Ascending aorta (tissue), 2 donors: ENCODE measurements at regions of chr4 and their contacts with region 1.

Region 1: DNA sequence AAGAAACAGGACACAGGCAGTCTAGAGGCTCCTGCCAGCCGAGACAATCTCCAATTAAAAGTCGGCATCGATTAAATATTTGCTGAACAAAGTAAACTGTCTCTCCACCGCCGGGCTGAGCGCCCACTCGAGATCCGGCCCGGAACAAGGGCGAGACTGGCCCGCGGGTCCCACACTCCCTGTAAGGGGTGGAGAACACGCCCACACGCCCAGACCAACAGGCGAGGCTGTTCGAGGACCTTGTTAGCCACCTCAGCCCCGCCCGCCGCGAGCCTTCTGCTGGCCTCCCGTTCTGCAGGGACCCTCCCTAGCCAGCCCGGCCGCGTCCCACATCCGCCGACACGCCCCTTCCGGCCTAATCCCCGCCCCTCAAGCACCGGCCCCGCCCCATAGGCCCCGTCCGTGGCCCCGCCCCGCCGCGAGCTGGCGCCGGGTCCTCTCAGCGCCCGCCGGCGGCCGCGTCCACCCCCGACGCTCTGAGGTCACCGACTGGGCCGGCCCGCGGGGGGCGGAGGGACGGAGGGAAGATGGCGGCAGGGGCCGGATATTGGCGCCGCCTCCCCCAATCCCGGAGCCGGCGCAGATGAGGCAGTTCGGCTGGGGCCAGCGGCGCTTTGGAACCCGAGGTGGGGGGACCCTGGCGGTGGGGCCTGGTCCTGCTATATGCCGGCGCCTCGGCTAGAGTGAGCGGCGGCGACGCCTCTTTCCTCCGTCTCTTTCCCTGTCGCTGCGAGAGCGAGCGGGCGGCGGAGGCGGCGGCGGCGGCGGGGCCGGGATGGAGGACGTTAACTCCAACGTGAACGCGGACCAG is at the start of gene SLAIN2:
- DNase-seq: peak; percentile 96 to 100
- H3K4me3 ChIP-seq: peak within 1 kb of the TSS; percentile 86 to 93
- H3K27ac ChIP-seq: peak within 1 kb of the TSS; percentile 98 to 99
- H3K4me1 ChIP-seq: peaks cover 11 to 14% of the 10 kb centered on the region in 2 donors
- H3K27me3 ChIP-seq: no peaks in the 10 kb centered on the region
- CTCF ChIP-seq: peak; percentile 26 to 51 (median 35)
- total RNA-seq, gene SLAIN2: 26.3 TPM

Region 2: DNA sequence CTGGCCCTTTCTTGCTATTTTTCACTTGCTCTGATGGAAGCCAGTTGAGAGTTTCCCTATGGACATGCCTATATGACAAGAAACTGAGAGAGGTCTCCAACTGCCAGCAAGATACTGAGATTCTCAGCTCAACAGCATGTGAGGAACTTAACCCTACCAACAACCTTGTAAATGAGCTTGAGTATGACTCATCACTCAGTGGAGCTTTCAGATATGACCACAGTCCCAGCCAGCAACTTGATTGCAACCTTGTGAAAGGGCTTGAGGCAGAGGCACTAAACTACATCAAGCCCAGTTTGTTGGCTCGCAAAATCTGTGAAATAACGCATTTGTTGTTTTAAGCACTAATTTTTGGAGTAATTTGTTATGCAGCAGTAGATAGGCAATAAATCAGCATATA is 1053.4 kb before region 1 on chr4:
- intact Hi-C with region 1: no loop called
- DNase-seq: no peak
- H3K4me3 ChIP-seq: no peak overlapping the region
- H3K27ac ChIP-seq: no peak overlapping the region
- H3K4me1 ChIP-seq: no peaks in the 10 kb centered on the region
- H3K27me3 ChIP-seq: no peaks in the 10 kb centered on the region
- CTCF ChIP-seq: no peak

Region 3: DNA sequence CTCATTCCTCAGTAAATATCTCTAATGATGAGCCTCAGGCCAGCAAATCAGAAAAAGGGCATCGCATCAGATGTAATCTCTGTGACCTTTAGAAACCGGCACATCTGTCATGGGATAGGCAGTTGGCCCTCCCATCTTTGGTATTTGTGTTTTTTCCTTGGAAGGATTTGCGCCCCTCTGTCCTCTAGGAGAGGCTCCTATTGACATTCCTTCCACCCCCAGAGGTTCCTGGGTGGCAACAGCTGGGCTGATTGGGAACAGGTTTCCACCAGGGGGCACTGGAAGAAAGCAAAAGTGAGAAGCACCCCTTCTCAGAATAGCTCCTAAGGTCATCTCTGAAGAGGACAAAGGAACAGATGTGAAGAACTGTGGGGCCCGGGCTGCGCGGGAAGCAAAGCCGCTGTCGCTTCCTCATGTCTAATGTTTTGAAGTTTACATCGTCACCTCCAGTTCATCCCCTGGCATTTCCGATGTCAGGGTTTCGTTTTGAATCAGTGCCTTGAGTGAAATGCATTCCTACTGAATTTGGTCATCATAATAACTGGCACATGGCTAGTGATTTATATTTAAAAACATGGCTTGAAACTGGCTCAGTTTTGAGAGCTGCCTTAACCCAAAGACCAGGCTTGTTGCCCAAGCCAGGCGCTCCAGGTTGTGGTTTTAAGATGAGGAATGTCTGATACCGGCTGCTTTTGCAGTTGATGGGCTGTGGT is 213.3 kb before region 1 on chr4:
- intact Hi-C with region 1: loop called (anchors 5 kb)
- DNase-seq: peak in 1 of 2 donors; percentile 69
- H3K4me3 ChIP-seq: peak overlapping the region; percentile 3 to 31
- H3K27ac ChIP-seq: peak overlapping the region; percentile 67 to 82
- H3K4me1 ChIP-seq: peaks cover 0 to 12% of the 10 kb centered on the region in 2 donors
- H3K27me3 ChIP-seq: no peaks in the 10 kb centered on the region
- CTCF ChIP-seq: peak; percentile 8 to 53 (median 42)

Region 4: GRCh38 chr4:48269861-48270522 is 71.2 kb before region 1 on chr4:
- intact Hi-C with region 1: loop called (anchors 1 kb)
- DNase-seq: peak; percentile 69 to 96
- H3K4me3 ChIP-seq: peak overlapping the region; percentile 88 to 92
- H3K27ac ChIP-seq: peak overlapping the region; percentile 78 to 80
- H3K4me1 ChIP-seq: peaks cover 0 to 3% of the 10 kb centered on the region in 2 donors
- H3K27me3 ChIP-seq: no peaks in the 10 kb centered on the region
- CTCF ChIP-seq: peak in 1 of 3 experiments; percentile 38

Region 5: GRCh38 chr4:48792348-48793006 is 451.3 kb after region 1 on chr4:
- intact Hi-C with region 1: loop called (anchors 10 kb)
- DNase-seq: no peak
- H3K4me3 ChIP-seq: no peak overlapping the region
- H3K27ac ChIP-seq: peak overlapping the region; percentile 62 to 70
- H3K4me1 ChIP-seq: peaks cover 0 to 34% of the 10 kb centered on the region in 2 donors
- H3K27me3 ChIP-seq: no peaks in the 10 kb centered on the region
- CTCF ChIP-seq: no peak